T-cell (primary cell): ENCODE measurements at regions of chr3 and their contacts with region 1.

Region 1: DNA sequence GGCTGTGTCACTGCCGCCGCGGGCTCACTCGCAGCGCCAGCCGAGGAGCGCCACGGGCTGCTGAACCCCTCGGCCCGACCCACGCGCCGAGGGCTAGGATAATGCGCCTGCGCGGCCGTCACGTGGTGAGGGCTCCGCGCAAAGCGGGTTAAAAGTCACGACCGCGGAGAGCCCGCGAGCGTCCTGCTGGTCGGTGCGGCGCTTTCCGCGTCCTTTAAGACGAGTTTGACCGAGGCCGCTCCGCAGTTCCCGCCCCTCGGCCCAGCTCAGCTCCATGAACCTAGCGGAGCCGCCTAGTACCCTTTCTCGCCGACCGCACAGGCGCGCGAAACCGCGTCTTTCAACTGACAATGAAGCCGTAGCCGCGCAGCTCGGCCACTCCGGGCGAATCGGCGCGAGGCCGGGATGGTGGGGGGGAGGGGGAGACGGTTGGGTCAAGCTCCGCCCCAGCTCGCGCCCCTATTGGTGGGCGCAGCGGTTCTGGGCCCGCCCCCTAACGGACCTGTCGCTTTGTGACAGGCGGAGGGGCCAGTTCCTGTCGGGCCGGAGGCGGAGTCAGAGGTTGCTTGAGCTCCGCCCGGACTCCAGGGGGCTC is 636 bp upstream of the STT3B start:
- DNase-seq: peak; percentile 94 to 99 (median 97)
- ATAC-seq: peak; percentile 85 to 88 (median 86)
- H3K4me3 ChIP-seq: peak overlapping the region; percentile 82 to 89
- H3K4me3 Mint-ChIP-seq: peak overlapping the region in 2 of 3 donors; percentile 98 to 99
- H3K27ac ChIP-seq: peak overlapping the region; percentile 92
- H3K27ac Mint-ChIP-seq: peak overlapping the region; percentile 97 to 98
- H3K4me1 ChIP-seq: peaks cover 7 to 33% of the 10 kb centered on the region in 2 experiments
- H3K4me1 Mint-ChIP-seq: peaks cover 22 to 25% (median 24%) of the 10 kb centered on the region in 3 donors
- H3K27me3 ChIP-seq: no peaks in the 10 kb centered on the region
- H3K27me3 Mint-ChIP-seq: no peaks in the 10 kb centered on the region

Region 2: DNA sequence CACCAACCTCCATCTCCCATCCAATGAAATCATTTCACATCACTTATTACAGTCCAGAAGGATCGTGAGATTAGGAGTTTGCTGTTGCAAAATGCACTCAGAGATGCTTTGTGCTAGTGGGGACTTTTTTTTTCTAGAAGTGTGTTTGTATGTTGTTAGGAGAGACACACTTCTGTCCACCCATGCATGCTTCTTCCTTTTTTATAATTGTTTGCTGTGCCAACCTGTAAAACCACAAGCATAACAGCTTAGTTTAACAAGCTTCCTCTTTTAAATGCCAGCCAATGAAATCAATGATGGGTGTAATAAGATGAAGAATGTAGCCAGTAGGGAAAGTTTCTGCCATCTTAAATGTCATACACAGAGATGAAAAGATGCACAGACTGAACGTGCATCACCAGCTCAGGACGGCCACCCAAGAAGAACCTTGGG is 304.9 kb before region 1 on chr3:
- CTCF ChIA-PET with region 1: interaction called in 1 of 2 experiments, 8 read pairs
- POLR2A ChIA-PET with region 1: interaction called, 7 to 26 read pairs
- DNase-seq: peak in 7 of 35 experiments; percentile 8 to 71 (median 18)
- ATAC-seq: peak; percentile 40 to 79 (median 54)
- H3K4me3 ChIP-seq: no peak overlapping the region
- H3K4me3 Mint-ChIP-seq: peak overlapping the region in 2 of 3 donors; percentile 6 to 62
- H3K27ac ChIP-seq: peak overlapping the region; percentile 92
- H3K27ac Mint-ChIP-seq: peak overlapping the region; percentile 93 to 95
- H3K4me1 ChIP-seq: peaks cover 59 to 88% of the 10 kb centered on the region in 2 experiments
- H3K4me1 Mint-ChIP-seq: peaks cover 89 to 96% (median 92%) of the 10 kb centered on the region in 3 donors
- H3K27me3 ChIP-seq: no peaks in the 10 kb centered on the region
- H3K27me3 Mint-ChIP-seq: no peaks in the 10 kb centered on the region

Region 3: GRCh38 chr3:31331306-31331705 is 200.8 kb before region 1 on chr3:
- CTCF ChIA-PET with region 1: no interaction called
- POLR2A ChIA-PET with region 1: no interaction called
- DNase-seq: no peak
- ATAC-seq: no peak
- H3K4me3 ChIP-seq: no peak overlapping the region
- H3K4me3 Mint-ChIP-seq: no peak overlapping the region
- H3K27ac ChIP-seq: no peak overlapping the region
- H3K27ac Mint-ChIP-seq: no peak overlapping the region
- H3K4me1 ChIP-seq: no peaks in the 10 kb centered on the region
- H3K4me1 Mint-ChIP-seq: no peaks in the 10 kb centered on the region
- H3K27me3 ChIP-seq: no peaks in the 10 kb centered on the region
- H3K27me3 Mint-ChIP-seq: no peaks in the 10 kb centered on the region

Region 4: DNA sequence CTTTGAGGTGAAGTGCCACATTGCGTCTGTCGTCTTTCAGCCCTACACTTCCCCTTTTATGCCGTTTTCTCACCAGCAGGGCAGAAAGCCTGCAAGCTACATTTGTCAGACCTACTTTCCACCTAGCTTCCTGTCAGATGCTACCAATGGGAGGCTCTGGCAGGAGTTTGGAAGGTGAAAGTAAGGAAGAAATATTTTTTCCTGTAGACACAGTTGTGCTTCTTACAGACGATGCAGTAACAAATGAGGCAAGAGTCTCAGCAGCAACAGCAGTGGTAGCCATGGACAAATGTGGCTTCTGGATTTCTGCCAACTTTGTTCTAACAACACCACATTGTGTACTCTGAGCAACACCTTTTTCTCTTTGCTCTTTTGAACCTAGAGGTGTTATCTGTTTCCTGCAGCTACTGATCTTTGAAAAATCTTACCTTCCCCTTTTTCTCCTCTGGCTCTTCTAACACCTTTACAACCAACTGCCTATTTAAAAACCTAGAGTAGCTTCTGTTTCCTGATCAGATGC is 70.0 kb before region 1 on chr3:
- CTCF ChIA-PET with region 1: interaction called, 5 to 23 read pairs
- POLR2A ChIA-PET with region 1: interaction called, 3 to 8 read pairs
- DNase-seq: peak; percentile 12 to 90 (median 54)
- ATAC-seq: peak; percentile 88 to 92 (median 90)
- H3K4me3 ChIP-seq: peak overlapping the region; percentile 9 to 47
- H3K4me3 Mint-ChIP-seq: peak overlapping the region; percentile 46 to 75 (median 62)
- H3K27ac ChIP-seq: peak overlapping the region; percentile 69
- H3K27ac Mint-ChIP-seq: peak overlapping the region; percentile 95 to 99
- H3K4me1 ChIP-seq: peaks cover 32 to 33% of the 10 kb centered on the region in 2 experiments
- H3K4me1 Mint-ChIP-seq: peaks cover 57 to 64% (median 62%) of the 10 kb centered on the region in 3 donors
- H3K27me3 ChIP-seq: no peaks in the 10 kb centered on the region
- H3K27me3 Mint-ChIP-seq: no peaks in the 10 kb centered on the region

Region 5: GRCh38 chr3:31544634-31545033 is 12.5 kb after region 1 on chr3:
- CTCF ChIA-PET with region 1: interaction called, 6 to 13 read pairs
- POLR2A ChIA-PET with region 1: interaction called, 4 to 15 read pairs
- DNase-seq: no peak
- ATAC-seq: peak in 1 of 4 experiments; percentile 35
- H3K4me3 ChIP-seq: no peak overlapping the region
- H3K4me3 Mint-ChIP-seq: peak overlapping the region; percentile 22 to 46 (median 44)
- H3K27ac ChIP-seq: no peak overlapping the region
- H3K27ac Mint-ChIP-seq: peak overlapping the region; percentile 47 to 49
- H3K4me1 ChIP-seq: peaks cover 15 to 17% of the 10 kb centered on the region in 2 experiments
- H3K4me1 Mint-ChIP-seq: peaks cover 86 to 95% (median 87%) of the 10 kb centered on the region in 3 donors
- H3K27me3 ChIP-seq: no peaks in the 10 kb centered on the region
- H3K27me3 Mint-ChIP-seq: no peaks in the 10 kb centered on the region

Region 6: GRCh38 chr3:31550452-31551251 is 18.6 kb after region 1 on chr3:
- CTCF ChIA-PET with region 1: interaction called, 6 to 13 read pairs
- POLR2A ChIA-PET with region 1: interaction called, 3 to 15 read pairs
- DNase-seq: peak in 2 of 35 experiments; percentile 15 to 67
- ATAC-seq: peak; percentile 48 to 72 (median 68)
- H3K4me3 ChIP-seq: no peak overlapping the region
- H3K4me3 Mint-ChIP-seq: peak overlapping the region in 2 of 3 donors; percentile 13 to 41
- H3K27ac ChIP-seq: no peak overlapping the region
- H3K27ac Mint-ChIP-seq: peak overlapping the region; percentile 36 to 71
- H3K4me1 ChIP-seq: peaks cover 13 to 19% of the 10 kb centered on the region in 2 experiments
- H3K4me1 Mint-ChIP-seq: peaks cover 84 to 88% (median 85%) of the 10 kb centered on the region in 3 donors
- H3K27me3 ChIP-seq: no peaks in the 10 kb centered on the region
- H3K27me3 Mint-ChIP-seq: no peaks in the 10 kb centered on the region